Heart right ventricle (tissue), 16 donors: ENCODE measurements at regions of chr19 and their contacts with region 1.

Region 1: DNA sequence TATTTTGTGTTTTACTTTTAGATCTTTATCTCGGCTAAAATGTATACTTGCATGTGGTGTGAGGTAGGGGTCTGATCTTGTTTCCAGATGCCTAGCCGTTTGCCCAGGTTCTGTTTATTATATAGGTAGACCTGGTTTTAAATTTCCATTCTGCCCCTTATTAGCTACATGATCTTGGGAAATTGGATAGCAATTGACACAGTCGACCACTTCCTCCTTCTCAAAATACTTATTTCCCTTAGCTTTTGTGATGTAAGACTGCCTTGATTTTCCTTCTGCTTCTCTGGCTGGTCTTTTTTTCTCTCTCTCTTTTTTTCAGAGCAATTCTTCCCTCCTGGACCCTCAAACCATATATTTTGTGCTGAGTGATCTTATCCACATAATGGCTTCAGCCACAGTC is 3.0 kb upstream of the PGLYRP1 start:
- DNase-seq: no peak
- ATAC-seq: no peak
- H3K4me3 ChIP-seq: no peak overlapping the region
- H3K27ac ChIP-seq: no peak overlapping the region
- H3K4me1 ChIP-seq: peaks cover 0 to 14% (median 0%) of the 10 kb centered on the region in 9 donors
- H3K27me3 ChIP-seq: peaks cover 0 to 73% (median 60%) of the 10 kb centered on the region in 7 donors
- CTCF ChIP-seq: no peak

Region 2: DNA sequence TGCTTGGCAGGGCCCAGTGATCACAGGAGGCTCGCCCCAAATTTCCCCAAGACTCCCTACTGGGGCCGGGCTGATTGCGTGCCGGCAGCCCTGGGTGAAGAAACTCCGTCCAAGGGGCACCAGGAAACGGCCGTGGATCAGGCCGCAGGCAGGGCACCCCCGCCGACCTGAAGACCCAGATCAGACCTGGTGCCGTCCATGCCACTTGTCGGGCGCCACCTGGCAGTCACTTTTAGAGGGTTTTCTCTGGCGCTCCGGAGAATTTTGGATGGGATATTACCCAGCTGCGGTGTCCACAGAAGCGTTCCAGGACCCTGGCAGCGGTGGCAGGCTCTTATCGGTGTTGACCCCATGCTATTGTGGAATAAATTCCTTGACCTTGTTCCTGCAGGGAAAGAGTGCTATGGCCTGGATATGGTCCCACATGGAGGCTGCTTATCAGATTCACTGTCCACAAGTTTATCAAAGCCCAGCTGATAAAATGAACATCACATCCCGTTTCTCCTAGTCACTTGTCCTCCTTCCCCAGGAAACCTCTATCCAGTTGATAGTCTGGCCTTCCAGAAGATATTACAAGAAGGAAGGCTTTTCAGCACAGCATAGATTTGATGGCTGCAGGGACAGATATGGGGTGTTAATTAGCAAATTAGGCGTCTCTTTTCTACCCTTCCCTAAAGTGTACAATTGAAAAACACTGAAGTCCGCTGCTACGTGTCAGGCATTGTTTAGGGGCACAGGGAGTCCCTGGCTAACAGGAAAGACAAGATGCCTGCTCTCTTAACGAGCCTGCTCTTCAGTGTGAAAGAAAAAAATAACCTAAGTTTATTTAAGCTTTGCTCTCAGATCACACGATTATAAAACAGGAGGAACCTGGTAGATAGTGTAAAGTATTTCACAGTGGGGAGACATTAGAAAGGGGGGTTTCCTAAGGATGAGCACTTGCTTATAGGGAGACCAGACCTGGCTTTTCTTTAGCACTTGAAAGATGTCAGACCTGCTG is 160.6 kb after region 1 on chr19:
- intact Hi-C with region 1: loop called in 5 of 10 experiments (anchors 5 kb)
- DNase-seq: no peak
- ATAC-seq: no peak
- H3K4me3 ChIP-seq: no peak overlapping the region
- H3K27ac ChIP-seq: no peak overlapping the region
- H3K4me1 ChIP-seq: no peaks in the 10 kb centered on the region
- H3K27me3 ChIP-seq: peaks cover 0 to 58% (median 33%) of the 10 kb centered on the region in 7 donors
- CTCF ChIP-seq: no peak

Region 3: GRCh38 chr19:46192992-46193650 is 167.3 kb after region 1 on chr19:
- intact Hi-C with region 1: loop called in 5 of 10 experiments (anchors 5 kb)
- DNase-seq: no peak
- ATAC-seq: peak in 1 of 8 donors; percentile 73
- H3K4me3 ChIP-seq: no peak overlapping the region
- H3K27ac ChIP-seq: peak overlapping the region in 1 of 10 donors; percentile 60
- H3K4me1 ChIP-seq: peaks cover 0 to 20% (median 0%) of the 10 kb centered on the region in 9 donors
- H3K27me3 ChIP-seq: peaks cover 0 to 85% (median 55%) of the 10 kb centered on the region in 7 donors
- CTCF ChIP-seq: no peak

Region 4: DNA sequence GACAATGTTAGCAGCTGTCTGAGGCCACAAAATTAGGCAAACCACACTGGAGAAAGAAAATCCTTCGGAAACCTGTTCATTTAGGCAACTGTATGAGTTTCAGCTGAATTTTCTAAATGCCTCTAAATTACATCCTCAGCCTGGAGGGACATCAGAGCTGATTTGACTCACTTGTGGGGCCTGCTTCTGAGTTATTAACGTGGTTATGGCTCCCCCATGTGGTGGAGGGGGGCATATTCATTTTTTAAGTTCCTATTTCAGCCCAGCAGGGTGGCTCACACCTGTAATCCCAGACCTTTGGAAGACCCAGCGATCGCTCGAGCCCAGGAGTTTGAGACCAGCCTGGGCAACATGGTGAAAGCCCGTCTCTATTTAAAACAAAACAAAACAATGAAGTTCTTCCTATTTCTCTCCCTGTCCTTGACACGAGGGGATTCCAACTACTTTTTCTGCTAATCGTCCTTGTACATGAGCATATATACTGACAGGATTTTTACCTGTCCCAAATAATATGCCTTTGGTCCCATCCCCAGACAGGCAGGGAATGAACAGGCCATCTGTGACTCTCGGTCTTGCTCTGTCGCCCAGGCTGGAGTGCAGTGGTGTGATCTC is 239.5 kb after region 1 on chr19:
- intact Hi-C with region 1: loop called (anchors 1 to 5 kb)
- DNase-seq: peak in 1 of 2 donors; percentile 67
- ATAC-seq: peak; percentile 71 to 88 (median 78)
- H3K4me3 ChIP-seq: no peak overlapping the region
- H3K27ac ChIP-seq: no peak overlapping the region
- H3K4me1 ChIP-seq: no peaks in the 10 kb centered on the region
- H3K27me3 ChIP-seq: peaks cover 0 to 76% (median 40%) of the 10 kb centered on the region in 7 donors
- CTCF ChIP-seq: peak; percentile 63 to 87 (median 83)